Stomach (tissue), 19 donors: ENCODE measurements at regions of chr6 and their contacts with region 1.

Region 1: DNA sequence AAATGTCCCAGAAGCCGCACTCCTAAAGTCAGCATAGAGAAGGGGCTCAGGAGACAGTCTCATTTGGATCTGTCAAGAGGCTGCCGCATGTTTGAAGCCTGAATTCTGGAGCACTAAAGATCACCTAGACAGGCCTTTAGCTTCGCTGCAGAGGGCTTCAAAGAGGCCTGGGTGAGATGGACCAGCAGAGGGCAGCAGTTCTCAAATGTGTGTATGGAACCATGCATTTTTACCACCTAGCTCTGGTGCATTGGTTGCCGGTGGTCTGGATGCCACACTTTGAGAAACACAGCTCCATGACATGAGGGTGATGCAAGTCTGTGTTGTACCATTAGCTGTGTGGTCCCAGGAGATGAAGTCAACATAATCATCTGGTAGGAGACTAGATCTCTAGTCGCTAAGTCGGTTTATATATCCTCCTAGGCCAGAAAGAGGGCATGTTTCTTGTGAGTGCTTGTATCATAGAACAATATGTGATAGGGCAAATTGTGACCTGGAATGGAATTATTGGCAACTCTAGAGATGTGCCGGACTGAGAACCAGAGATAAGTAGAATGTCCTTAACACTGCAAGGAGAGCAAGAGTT is 64.8 kb downstream of the KIAA0319 start:
- DNase-seq: peak; percentile 81 to 88
- H3K4me3 ChIP-seq: no peak overlapping the region
- H3K27ac ChIP-seq: no peak overlapping the region
- H3K4me1 ChIP-seq: peaks cover 0 to 21% (median 11%) of the 10 kb centered on the region in 4 donors
- H3K27me3 ChIP-seq: no peaks in the 10 kb centered on the region
- CTCF ChIP-seq: peak in 5 of 7 experiments; percentile 49 to 79 (median 70)
- EP300 ChIP-seq: no peak
- POLR2A ChIP-seq: no peak

Region 2: GRCh38 chr6:24689964-24690363 is 108.8 kb after region 1 on chr6:
- intact Hi-C with region 1: loop called (anchors 5 kb)
- DNase-seq: no peak
- H3K4me3 ChIP-seq: no peak overlapping the region
- H3K27ac ChIP-seq: no peak overlapping the region
- H3K4me1 ChIP-seq: peaks cover 0 to 5% (median 0%) of the 10 kb centered on the region in 4 donors
- H3K27me3 ChIP-seq: no peaks in the 10 kb centered on the region
- CTCF ChIP-seq: no peak
- EP300 ChIP-seq: no peak
- POLR2A ChIP-seq: no peak